Activated CD4-positive, alpha-beta memory T cell treated with anti-CD3 and anti-CD28 coated beads for 36 hours (primary cell): ENCODE measurements at regions of chr1 and their contacts with region 1.

Region 1: GRCh38 chr1:26161415-26162219 is 2.7 kb downstream of the FAM110D start:
- DNase-seq: peak; percentile 50
- H3K4me3 Mint-ChIP-seq: peak overlapping the region; percentile 24
- H3K27ac Mint-ChIP-seq: no peak overlapping the region
- H3K4me1 Mint-ChIP-seq: peaks cover 10% of the 10 kb centered on the region
- H3K27me3 Mint-ChIP-seq: peaks cover 31% of the 10 kb centered on the region

Region 2: GRCh38 chr1:25952841-25953401 is 208.7 kb before region 1 on chr1:
- CTCF ChIA-PET with region 1: no interaction called
- POLR2A ChIA-PET with region 1: no interaction called
- intact Hi-C with region 1: no loop called
- DNase-seq: no peak
- H3K4me3 Mint-ChIP-seq: no peak overlapping the region
- H3K27ac Mint-ChIP-seq: no peak overlapping the region
- H3K4me1 Mint-ChIP-seq: no peaks in the 10 kb centered on the region
- H3K27me3 Mint-ChIP-seq: no peaks in the 10 kb centered on the region

Region 3: DNA sequence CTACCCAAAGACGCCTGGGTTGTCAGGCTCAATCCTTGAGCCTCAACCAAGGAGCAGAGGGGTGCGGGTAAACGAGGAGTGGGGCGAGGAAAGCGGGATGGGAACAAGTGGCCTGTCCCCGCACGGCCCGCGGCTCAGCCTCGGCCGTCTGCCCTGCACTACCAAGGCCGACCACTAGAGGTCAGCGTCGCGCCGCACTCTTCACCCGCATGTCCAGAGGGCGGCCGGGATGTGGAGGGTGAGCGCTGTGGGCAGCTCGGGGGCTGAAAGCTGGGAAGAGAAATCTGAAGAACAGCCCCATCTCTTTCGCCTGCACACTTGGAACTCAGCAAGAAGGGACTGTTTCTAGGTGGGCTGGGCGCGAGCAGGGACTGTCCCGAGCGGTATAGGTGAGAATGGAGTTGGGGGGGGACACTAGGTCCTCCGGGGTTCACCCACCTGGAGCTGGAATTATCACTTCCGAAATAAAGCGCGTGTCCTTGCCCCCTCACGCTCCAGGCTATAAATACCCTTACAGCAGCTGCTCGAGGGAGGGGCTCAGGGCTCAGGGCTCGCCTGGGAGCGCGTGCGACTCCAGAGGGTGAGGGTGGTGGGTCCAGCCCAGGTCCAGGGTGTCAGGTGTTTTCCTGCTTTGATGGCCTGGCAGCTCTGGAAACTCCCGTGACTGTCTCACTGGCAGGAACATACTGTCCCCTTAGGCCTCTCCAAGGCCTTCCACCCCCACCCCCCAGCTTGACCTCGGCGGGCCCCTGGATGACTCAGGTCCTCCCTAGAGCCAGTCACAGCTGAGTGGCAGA is 125.5 kb before region 1 on chr1:
- CTCF ChIA-PET with region 1: interaction called, 3 read pairs
- POLR2A ChIA-PET with region 1: no interaction called
- intact Hi-C with region 1: loop called (anchors 5 kb)
- DNase-seq: peak; percentile 84
- H3K4me3 Mint-ChIP-seq: peak overlapping the region; percentile 91
- H3K27ac Mint-ChIP-seq: no peak overlapping the region
- H3K4me1 Mint-ChIP-seq: peaks cover 11% of the 10 kb centered on the region
- H3K27me3 Mint-ChIP-seq: peaks cover 5% of the 10 kb centered on the region